Activated CD8-positive, alpha-beta T cell treated with anti-CD3 and anti-CD28 coated beads for 36 hours (primary cell): ENCODE measurements at regions of chr3 and their contacts with region 1.

Region 1: DNA sequence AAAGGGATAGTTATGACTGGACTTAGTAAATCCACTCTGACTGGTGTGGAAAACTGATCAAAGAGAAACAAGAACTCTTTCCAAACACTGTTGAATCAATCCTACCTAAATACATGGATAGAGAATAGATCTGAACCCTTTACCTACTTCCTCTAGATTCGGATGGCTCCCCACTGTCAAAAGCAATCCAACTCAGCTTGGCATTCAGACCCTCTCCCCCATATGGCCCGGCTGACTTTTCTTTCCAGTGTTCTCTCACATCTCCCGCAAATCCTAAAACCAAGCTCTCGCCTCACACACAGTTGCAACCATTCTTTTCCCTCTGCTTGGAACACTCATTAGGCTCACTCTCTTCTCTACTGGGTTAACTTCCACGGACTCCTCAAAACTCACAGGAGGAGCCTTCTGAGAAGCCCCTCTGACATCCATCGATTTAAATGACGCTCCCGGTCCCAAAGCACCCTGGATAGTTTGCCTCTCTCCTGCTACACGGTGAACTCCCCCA is 639 bp downstream of the SPICE1 start:
- DNase-seq: no peak
- ATAC-seq: no peak
- H3K4me3 Mint-ChIP-seq: no peak overlapping the region
- H3K27ac Mint-ChIP-seq: no peak overlapping the region
- H3K4me1 Mint-ChIP-seq: peaks cover 18% of the 10 kb centered on the region
- H3K27me3 Mint-ChIP-seq: peaks cover 6% of the 10 kb centered on the region
- CTCF ChIP-seq: no peak

Region 2: DNA sequence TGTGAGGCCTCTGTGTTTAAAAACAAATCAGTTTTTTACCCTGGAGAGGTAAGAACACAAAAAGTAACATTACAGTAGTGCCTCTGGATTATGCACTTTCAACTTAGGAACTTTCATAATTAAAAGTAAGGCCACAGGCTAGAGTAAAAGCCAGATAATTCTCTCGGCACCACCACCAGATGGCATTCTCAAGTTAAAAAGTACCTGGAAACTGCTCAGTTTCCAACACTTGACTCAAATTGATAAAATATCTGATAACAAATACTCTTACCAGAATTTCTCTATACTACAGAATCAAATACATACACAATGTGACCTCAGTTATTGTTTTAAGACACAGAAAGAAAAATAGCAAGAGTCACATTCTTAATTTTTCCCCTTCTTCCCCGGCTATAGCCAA is 19.3 kb before region 1 on chr3:
- CTCF ChIA-PET with region 1: interaction called, 17 read pairs
- POLR2A ChIA-PET with region 1: interaction called, 4 read pairs
- intact Hi-C with region 1: no loop called
- DNase-seq: peak; percentile 61
- ATAC-seq: peak; percentile 27
- H3K4me3 Mint-ChIP-seq: no peak overlapping the region
- H3K27ac Mint-ChIP-seq: no peak overlapping the region
- H3K4me1 Mint-ChIP-seq: peaks cover 4% of the 10 kb centered on the region
- H3K27me3 Mint-ChIP-seq: no peaks in the 10 kb centered on the region
- CTCF ChIP-seq: peak; percentile 27

Region 3: GRCh38 chr3:113531826-113532697 is 17.7 kb after region 1 on chr3 and contains the start of gene SIDT1:
- CTCF ChIA-PET with region 1: interaction called, 8 read pairs
- POLR2A ChIA-PET with region 1: interaction called, 24 read pairs
- intact Hi-C with region 1: loop called (anchors 2 kb)
- DNase-seq: peak; percentile 81
- ATAC-seq: peak; percentile 80
- H3K4me3 Mint-ChIP-seq: peak within 1 kb of the TSS; percentile 97
- H3K27ac Mint-ChIP-seq: peak within 1 kb of the TSS; percentile 98
- H3K4me1 Mint-ChIP-seq: peaks cover 39% of the 10 kb centered on the region
- H3K27me3 Mint-ChIP-seq: no peaks in the 10 kb centered on the region
- CTCF ChIP-seq: no peak
- total RNA-seq, gene SIDT1: 21.0 to 24.0 TPM

Region 4: GRCh38 chr3:113745273-113746068 is 231.2 kb after region 1 on chr3:
- CTCF ChIA-PET with region 1: interaction called, 16 read pairs
- POLR2A ChIA-PET with region 1: interaction called, 5 read pairs
- intact Hi-C with region 1: loop called (anchors 10 kb)
- DNase-seq: peak; percentile 90
- ATAC-seq: peak; percentile 72
- H3K4me3 Mint-ChIP-seq: peak overlapping the region; percentile 98
- H3K27ac Mint-ChIP-seq: peak overlapping the region; percentile 100
- H3K4me1 Mint-ChIP-seq: peaks cover 63% of the 10 kb centered on the region
- H3K27me3 Mint-ChIP-seq: no peaks in the 10 kb centered on the region
- CTCF ChIP-seq: peak; percentile 52